PC-3 (cell line): ENCODE measurements at regions of chr12 and their contacts with region 1.

Region 1: GRCh38 chr12:92570056-92570753 is 132.6 kb upstream of the PLEKHG7 start:
- DNase-seq: peak; percentile 91
- ATAC-seq: peak; percentile 68
- H3K4me3 ChIP-seq: no peak overlapping the region
- H3K27ac ChIP-seq: no peak overlapping the region
- H3K4me1 ChIP-seq: peaks cover 16% of the 10 kb centered on the region
- H3K27me3 ChIP-seq: no peaks in the 10 kb centered on the region
- CTCF ChIP-seq: peak; percentile 91

Region 2: DNA sequence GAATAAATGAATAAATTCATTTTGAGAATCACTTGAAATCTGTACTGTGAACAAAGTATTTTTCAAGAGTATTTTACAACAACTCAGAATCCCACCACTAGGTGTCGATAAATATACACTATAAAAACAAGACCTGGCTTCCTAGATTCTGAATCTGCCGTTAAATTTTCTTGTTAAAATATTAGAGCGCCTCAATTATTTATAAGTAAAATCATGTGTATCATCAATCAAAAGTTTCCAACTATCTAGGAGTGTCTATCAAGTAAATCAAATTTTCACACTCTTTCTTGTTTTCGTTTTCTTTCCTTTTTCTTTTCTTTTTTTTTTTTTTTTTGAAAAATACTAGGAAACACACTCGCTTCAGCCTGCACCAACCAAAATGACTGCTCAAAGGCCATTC is 1208.3 kb before region 1 on chr12:
- CTCF ChIA-PET with region 1: no interaction called
- POLR2A ChIA-PET with region 1: no interaction called
- intact Hi-C with region 1: loop called (anchors 1 kb)
- DNase-seq: peak; percentile 73
- ATAC-seq: no peak
- H3K4me3 ChIP-seq: no peak overlapping the region
- H3K27ac ChIP-seq: no peak overlapping the region
- H3K4me1 ChIP-seq: no peaks in the 10 kb centered on the region
- H3K27me3 ChIP-seq: no peaks in the 10 kb centered on the region
- CTCF ChIP-seq: peak; percentile 73

Region 3: DNA sequence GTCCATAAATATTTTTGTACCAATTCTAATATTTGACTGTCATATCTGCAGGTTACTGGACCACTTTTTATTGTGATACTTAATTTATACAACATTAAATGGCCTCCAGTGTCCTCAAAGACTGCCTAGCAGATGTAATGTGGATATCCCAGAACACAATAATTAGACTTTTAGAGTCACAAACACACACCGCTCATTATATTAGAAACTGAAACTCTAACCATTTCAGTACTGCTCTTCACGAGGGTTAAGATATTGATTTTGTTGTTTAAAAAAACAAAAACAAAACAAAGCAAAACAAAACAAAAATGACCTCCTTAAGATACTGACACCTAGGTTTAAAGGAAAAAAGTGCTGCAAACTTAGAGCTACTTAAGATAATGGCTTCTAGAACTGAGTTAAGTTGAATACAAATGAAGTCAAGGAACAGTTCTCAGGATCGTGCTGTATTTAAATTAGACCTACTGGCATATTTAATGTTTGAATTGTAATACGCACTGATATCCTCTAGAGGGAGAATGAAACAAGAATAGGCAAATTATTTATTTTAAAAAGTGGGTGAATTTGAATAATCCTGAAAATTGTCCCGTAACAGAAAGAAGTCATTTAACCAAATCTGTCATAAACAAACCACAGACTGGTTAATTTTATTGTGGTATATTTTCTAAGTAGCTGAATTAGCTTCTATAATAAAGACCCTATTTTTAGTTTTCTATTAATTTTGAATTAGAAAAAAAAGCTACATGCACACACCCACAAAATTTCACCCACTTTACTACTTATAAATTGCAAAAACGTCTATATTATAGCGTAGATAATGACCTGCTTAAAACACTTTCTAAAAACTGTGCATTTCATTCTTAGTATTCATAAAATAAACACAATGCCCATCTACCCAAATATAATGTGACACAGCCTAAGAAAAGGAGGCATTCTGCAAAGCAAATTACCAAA is 992.3 kb before region 1 on chr12:
- CTCF ChIA-PET with region 1: no interaction called
- POLR2A ChIA-PET with region 1: interaction called, 4 read pairs
- intact Hi-C with region 1: loop called (anchors 2 kb)
- DNase-seq: peak; percentile 66
- ATAC-seq: no peak
- H3K4me3 ChIP-seq: peak overlapping the region; percentile 66
- H3K27ac ChIP-seq: peak overlapping the region; percentile 95
- H3K4me1 ChIP-seq: peaks cover 45% of the 10 kb centered on the region
- H3K27me3 ChIP-seq: no peaks in the 10 kb centered on the region
- CTCF ChIP-seq: peak; percentile 74

Region 4: DNA sequence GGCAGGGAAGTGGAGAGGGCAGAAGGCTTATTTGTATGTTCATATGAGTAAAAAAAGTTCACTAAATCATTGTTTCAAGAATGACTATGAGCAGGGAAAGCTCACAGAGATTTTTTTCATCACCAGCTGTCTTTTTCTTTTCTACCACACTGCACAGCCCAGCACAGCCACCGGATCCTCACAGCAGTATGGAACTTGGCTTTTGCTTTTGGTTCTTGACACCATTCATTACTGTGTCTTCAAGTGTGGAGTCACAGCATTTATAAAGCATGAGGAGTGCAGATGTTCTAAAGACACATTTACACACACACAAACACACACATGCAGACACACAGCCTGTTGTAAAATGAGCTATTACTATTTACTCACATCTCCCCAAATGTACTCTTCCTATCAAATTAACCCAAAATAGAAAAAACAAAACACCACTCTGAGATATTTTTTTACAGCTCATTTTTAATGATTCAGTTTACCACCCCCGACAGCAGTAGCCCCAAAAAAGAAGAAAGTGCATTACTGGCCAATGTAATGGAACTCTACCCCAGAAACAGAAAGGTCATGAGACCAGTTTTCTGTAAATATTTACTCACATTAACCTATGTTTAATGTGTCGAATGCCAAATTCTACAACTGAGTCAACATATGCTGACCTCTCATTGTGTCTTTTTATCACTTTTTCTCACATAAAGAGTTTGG is 485.0 kb before region 1 on chr12:
- CTCF ChIA-PET with region 1: no interaction called
- POLR2A ChIA-PET with region 1: no interaction called
- intact Hi-C with region 1: loop called (anchors 10 kb)
- DNase-seq: no peak
- ATAC-seq: peak; percentile 7; the same call in 1 of the 2 replicates
- H3K4me3 ChIP-seq: no peak overlapping the region
- H3K27ac ChIP-seq: peak overlapping the region; percentile 61
- H3K4me1 ChIP-seq: peaks cover 44% of the 10 kb centered on the region
- H3K27me3 ChIP-seq: no peaks in the 10 kb centered on the region
- CTCF ChIP-seq: no peak

Region 5: DNA sequence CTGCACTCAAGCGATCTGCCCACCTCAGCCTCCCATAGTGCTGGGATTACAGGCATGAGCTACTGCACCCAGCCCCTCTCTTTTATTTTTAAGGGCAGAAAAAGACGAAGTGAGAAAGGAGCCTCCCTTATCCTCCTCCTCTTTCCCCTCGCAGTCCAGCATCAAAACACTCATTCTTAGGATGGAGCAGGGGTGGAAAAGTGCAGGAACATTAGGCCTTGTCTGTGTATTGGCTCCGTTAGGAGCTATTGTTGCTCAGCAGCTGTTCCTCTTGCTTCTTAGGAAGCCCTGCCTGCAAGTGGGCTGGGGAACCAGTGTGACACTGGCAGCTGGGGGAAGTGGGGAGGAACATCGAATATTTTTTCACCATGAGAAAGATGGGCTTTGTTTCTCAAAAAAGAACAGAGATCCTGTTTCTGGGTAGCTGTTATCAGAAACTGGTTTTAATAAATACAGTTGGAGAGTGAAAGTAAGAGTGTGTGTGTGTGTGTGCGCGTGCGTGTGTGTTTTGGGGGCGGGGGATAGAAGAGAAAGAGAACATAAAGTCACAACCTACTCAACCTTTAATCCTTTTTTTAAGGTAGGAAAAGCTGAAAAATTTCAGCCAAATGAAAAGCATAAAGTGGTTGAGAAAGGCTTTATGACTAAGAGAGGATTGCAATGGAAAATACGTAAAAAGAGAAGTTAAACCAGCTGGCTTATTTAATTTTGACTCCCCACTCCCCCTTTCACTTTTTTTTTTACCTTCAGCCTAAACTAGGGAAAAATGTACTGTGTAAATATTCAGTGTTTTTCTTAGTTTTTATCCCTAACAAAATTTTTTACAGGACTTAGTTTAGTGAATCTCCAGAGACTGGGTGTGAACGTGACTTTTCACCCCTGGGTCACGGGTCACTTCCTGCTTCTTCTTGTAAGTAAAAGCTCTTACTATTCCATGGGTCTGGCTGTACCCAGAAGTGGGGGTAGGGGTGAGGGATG is 64.7 kb before region 1 on chr12:
- CTCF ChIA-PET with region 1: interaction called, 4 read pairs
- POLR2A ChIA-PET with region 1: no interaction called
- intact Hi-C with region 1: loop called (anchors 2 kb)
- DNase-seq: no peak
- ATAC-seq: no peak
- H3K4me3 ChIP-seq: no peak overlapping the region
- H3K27ac ChIP-seq: no peak overlapping the region
- H3K4me1 ChIP-seq: no peaks in the 10 kb centered on the region
- H3K27me3 ChIP-seq: no peaks in the 10 kb centered on the region
- CTCF ChIP-seq: no peak

Region 6: DNA sequence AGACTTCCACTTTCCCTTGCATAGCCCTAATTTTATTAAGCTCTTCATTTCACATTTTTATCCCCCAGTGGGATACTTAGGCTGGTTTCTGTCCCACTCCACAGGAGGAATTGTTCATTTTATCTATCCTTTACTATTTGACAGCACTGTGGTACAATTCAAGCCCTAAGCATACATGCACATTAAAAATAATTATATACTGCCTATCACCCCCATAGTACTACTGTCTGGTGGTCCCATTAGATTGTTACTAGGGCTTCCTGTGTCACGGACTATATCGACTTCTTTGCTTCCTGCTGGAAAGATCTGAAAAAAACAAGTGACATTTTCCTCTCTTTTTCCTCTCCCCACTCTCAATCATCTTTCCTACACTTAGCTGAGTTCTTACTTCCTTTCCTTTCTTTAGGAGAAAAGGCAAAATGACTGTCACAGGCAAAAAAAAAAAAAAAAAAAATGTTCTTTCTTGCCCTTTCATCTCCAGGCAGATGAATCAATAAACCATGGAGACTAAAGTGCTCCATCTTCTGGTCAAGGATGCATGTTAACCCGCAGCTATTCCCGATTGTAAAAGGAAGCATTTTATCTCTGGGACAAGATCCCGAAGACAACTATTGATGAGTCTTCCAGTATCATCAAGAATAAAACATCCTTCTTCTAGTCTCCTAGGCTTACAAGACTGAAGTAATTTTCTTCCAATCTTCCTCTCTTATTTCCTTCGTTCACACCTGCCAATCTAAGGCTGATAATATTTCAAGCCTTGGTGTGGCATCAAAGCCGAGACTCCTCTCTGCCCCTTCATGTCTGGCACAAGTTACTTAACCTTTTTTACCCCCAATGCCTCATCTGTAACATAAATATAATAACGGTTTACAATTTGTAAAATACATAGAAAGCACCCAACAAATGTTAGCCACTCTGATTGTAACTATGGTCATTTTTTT is 38.2 kb after region 1 on chr12:
- CTCF ChIA-PET with region 1: interaction called, 9 read pairs
- POLR2A ChIA-PET with region 1: no interaction called
- intact Hi-C with region 1: loop called (anchors 1 kb)
- DNase-seq: peak; percentile 73
- ATAC-seq: peak; percentile 54
- H3K4me3 ChIP-seq: no peak overlapping the region
- H3K27ac ChIP-seq: no peak overlapping the region
- H3K4me1 ChIP-seq: peaks cover 9% of the 10 kb centered on the region; the same call in 1 of the 2 replicates
- H3K27me3 ChIP-seq: no peaks in the 10 kb centered on the region
- CTCF ChIP-seq: peak; percentile 85